A549 (cell line): ENCODE measurements at regions of chr17 and their contacts with region 1.

Region 1: DNA sequence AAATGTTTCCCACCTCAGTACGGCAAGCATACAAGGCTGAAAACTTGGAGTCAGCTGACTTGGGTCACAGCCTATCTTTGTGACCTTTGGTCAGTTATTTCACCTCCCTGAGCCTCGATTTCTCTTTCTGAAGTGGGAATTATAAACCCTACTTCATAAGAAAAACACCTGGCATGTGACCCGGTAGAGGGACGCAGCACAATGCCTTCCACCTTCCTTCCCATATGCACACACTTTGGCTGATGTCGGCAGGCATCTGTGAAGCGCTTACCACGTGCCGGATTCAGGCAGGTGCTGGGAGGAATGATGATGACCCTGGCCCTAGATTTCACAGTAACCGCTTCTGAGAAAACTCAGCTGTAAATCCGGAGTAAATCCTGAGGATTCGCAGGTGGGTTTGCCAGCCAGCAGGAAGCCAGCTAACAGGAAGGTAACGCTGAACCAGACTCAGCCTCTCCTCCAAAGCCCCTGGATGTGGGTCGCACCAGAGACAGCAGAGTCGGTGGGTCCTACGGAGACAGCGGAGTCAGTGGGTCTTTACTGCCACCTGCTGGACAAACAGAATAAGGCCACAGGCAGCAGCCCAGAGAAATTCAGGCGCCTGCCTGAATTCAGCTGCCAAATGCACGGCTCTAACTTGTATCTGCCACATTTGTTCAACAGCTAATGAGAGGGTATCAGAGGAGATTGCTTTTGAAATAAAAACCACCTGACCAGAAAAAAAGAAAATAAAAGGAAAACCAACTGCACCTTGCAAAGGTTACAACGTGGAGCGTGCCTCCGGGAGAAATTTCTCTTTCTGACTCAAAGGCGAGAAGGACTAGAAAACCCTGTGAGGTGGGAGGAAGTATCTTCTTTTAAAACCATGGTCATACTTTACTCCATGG is 16.6 kb downstream of the COPRS start:
- DNase-seq: peak; percentile 67 to 87
- ATAC-seq: peak; percentile 85 to 95
- H3K4me3 ChIP-seq: no peak overlapping the region; the same call in 2 of the 3 replicates
- H3K27ac ChIP-seq: peak overlapping the region in 1 of 2 experiments; percentile 68; a peak in 3 of 6 replicates
- H3K4me1 ChIP-seq: peaks cover 10% of the 10 kb centered on the region; the same call in 2 of the 3 replicates
- CTCF ChIP-seq: peak; percentile 99
- EP300 ChIP-seq: no peak
- POLR2A ChIP-seq: no peak
- RAD21 ChIP-seq: peak; percentile 98 to 99

Region 2: GRCh38 chr17:31433091-31433790 is 409.2 kb before region 1 on chr17:
- CTCF ChIA-PET with region 1: interaction called, 33 read pairs
- POLR2A ChIA-PET with region 1: no interaction called
- DNase-seq: no peak
- ATAC-seq: no peak
- H3K4me3 ChIP-seq: no peak overlapping the region
- H3K27ac ChIP-seq: no peak overlapping the region
- H3K4me1 ChIP-seq: no peaks in the 10 kb centered on the region
- CTCF ChIP-seq: no peak
- EP300 ChIP-seq: no peak
- POLR2A ChIP-seq: no peak
- RAD21 ChIP-seq: no peak

Region 3: DNA sequence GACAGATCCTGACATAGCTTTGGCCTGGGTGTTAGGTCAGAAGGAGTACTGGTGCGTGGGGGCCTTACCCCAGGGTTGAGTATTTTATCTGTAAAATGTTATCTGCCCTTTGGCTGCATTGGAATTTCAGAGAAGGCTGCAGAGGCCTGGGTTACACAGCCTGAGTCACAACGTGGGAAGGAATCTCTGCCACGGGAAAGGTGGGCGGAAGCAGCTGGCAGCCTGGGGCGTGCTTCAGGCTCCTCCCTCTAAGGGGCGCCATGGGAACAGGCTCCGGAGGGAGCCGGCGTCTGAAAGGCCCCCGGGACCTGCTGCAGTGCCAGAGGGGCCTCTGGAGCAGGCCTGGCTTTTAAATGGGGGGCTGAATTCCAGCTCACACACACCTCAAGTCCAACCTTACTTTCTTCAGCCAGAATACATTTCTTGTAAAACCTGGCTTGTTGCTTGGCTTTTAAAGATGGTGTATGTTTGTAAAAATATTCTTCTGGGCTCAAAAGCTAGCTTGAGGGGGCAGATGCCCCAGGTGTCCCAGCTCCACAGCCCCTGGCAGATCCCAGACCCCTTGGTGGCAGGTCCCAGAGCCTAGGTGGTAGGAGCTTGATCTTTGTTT is 308.8 kb before region 1 on chr17:
- CTCF ChIA-PET with region 1: interaction called, 36 read pairs
- POLR2A ChIA-PET with region 1: no interaction called
- DNase-seq: peak; percentile 45 to 79
- ATAC-seq: peak; percentile 58 to 83
- H3K4me3 ChIP-seq: no peak overlapping the region
- H3K27ac ChIP-seq: peak overlapping the region in 1 of 2 experiments; percentile 29; a peak in 3 of 6 replicates
- H3K4me1 ChIP-seq: peaks cover 7% of the 10 kb centered on the region
- CTCF ChIP-seq: peak; percentile 39
- EP300 ChIP-seq: no peak
- POLR2A ChIP-seq: no peak
- RAD21 ChIP-seq: peak; percentile 56 to 63

Region 4: GRCh38 chr17:31564883-31565301 is 277.5 kb before region 1 on chr17:
- CTCF ChIA-PET with region 1: interaction called, 377 read pairs
- POLR2A ChIA-PET with region 1: no interaction called
- DNase-seq: no peak
- ATAC-seq: no peak
- H3K4me3 ChIP-seq: no peak overlapping the region
- H3K27ac ChIP-seq: 0 out of 6 replicates have a peak overlapping the region, but pooled peaks of 1 of the 2 experiments have one; percentile 10
- H3K4me1 ChIP-seq: peaks cover 35% of the 10 kb centered on the region
- CTCF ChIP-seq: no peak
- EP300 ChIP-seq: no peak
- POLR2A ChIP-seq: no peak
- RAD21 ChIP-seq: no peak

Region 5: DNA sequence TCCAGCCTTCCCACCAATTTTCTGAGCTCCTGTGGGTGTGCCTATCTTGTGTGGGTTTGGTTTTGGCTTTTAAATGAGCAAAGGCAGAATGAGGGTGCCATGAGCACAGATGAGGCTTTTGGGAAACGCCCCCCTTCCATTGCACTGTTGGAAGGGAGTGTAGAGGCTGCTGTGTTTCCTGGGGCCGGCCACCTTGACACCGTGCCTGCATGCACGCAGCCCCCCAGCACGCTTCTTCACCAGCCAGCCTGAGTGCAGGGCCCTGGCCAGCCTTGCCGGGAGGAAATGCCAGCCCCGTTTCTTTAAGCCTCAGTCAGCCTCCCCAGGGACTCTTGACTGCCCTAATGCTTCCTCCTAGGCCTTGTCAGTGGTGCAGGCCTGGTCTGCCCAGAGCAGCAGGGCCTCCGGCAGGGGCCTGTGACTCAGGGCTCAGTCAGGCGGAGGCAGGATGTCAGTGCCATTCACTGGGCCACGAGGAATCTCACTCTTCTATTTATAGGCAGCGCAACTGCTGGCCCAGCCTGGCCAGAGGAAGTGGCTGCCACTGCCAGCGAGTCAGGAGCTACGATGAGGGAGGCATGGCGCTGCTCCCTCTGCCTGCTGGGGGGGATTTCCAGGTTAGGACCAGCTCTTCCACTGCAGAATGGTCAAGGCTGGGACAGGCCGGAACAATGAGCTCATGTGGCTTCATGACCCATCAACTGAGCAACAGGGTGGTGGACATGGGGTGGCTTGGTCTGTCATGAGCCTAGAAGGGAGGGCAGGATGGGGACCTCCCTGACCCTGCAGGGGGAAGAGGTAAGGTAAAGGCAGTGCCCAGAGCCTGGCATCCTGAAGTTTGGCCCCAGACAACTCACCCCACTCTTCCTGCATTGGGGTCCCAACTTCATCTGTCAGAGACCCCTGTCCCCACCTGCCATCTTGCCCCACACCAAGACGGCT is 245.8 kb before region 1 on chr17:
- CTCF ChIA-PET with region 1: interaction called, 13 read pairs
- POLR2A ChIA-PET with region 1: no interaction called
- DNase-seq: peak; percentile 86 to 87
- ATAC-seq: peak; percentile 92 to 95
- H3K4me3 ChIP-seq: no peak overlapping the region
- H3K27ac ChIP-seq: peak overlapping the region; percentile 49 to 83; a peak in 5 of 6 replicates
- H3K4me1 ChIP-seq: peaks cover 38% of the 10 kb centered on the region
- CTCF ChIP-seq: no peak
- EP300 ChIP-seq: no peak
- POLR2A ChIP-seq: 0 out of 2 replicates have a peak, but pooled peaks have one; percentile 11
- RAD21 ChIP-seq: peak in 1 of 2 experiments; percentile 12; a peak in 1 of 5 replicates

Region 6: DNA sequence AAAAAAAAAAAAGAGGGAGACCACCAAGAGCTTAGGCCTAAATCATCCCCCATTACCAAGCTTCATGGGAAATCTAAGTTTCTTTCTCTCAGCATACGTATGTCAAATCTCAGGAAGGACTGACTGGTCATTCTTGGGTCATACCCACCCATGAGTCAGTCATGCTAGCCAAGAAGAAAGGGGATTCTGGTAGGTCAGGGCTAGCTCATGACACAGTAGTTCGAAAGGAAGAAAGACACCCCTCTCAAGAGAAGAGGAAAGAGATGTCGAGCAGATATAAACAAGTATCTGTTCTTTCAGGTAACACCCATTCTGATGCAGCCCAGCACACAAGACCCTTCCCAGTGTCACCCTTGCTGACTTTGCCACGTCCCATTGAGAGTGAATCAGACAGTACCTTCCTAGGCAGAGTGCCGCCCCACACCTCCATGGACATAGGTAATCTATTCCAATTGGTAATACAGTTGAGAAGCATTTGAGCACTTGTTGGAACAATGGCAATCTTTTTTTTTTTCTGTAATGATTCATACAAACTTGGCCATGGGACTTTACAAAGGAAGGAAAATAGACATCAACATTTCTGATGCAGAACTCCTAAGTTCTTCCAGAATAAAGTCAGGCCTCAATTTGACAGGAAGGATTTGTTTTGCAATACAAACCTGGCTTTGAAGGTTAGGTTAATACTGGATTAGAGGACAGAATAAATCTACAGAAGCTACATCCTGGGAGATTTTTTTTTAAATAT is 21.6 kb before region 1 on chr17:
- CTCF ChIA-PET with region 1: interaction called, 19 read pairs
- POLR2A ChIA-PET with region 1: no interaction called
- DNase-seq: no peak
- ATAC-seq: no peak
- H3K4me3 ChIP-seq: no peak overlapping the region
- H3K27ac ChIP-seq: no peak overlapping the region
- H3K4me1 ChIP-seq: no peaks in the 10 kb centered on the region
- CTCF ChIP-seq: no peak
- EP300 ChIP-seq: no peak
- POLR2A ChIP-seq: no peak
- RAD21 ChIP-seq: no peak

Region 7: DNA sequence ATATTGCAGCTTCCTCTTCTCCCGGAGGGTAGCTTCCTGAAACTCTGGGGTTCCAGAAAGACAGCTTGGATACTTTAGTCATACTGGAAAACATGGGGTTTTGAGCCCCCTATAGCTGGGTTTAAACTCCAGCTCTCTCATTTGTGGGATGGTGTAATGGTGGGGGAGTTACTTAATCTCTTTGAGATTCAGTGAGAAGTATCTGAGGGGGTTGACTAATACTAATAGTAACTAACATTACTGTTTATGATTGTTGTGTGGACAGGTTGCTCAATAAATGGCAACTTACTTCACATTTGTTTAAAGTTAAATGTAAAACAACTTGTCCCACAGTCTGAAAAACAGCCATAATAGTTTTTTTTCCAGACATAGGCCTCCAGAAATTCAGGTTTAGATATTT is 89.3 kb after region 1 on chr17:
- CTCF ChIA-PET with region 1: no interaction called
- POLR2A ChIA-PET with region 1: no interaction called
- DNase-seq: no peak
- ATAC-seq: no peak
- H3K4me3 ChIP-seq: no peak overlapping the region
- H3K27ac ChIP-seq: no peak overlapping the region
- H3K4me1 ChIP-seq: no peaks in the 10 kb centered on the region
- CTCF ChIP-seq: no peak
- EP300 ChIP-seq: no peak; a peak in 1 of 5 replicates
- POLR2A ChIP-seq: no peak
- RAD21 ChIP-seq: no peak

Region 8: GRCh38 chr17:31997005-31997404 is 154.6 kb after region 1 on chr17:
- CTCF ChIA-PET with region 1: no interaction called
- POLR2A ChIA-PET with region 1: no interaction called
- DNase-seq: no peak
- ATAC-seq: no peak; a peak in 1 of 6 replicates
- H3K4me3 ChIP-seq: no peak overlapping the region
- H3K27ac ChIP-seq: no peak overlapping the region
- H3K4me1 ChIP-seq: no peaks in the 10 kb centered on the region
- CTCF ChIP-seq: no peak
- EP300 ChIP-seq: no peak
- POLR2A ChIP-seq: no peak
- RAD21 ChIP-seq: no peak

Region 9: DNA sequence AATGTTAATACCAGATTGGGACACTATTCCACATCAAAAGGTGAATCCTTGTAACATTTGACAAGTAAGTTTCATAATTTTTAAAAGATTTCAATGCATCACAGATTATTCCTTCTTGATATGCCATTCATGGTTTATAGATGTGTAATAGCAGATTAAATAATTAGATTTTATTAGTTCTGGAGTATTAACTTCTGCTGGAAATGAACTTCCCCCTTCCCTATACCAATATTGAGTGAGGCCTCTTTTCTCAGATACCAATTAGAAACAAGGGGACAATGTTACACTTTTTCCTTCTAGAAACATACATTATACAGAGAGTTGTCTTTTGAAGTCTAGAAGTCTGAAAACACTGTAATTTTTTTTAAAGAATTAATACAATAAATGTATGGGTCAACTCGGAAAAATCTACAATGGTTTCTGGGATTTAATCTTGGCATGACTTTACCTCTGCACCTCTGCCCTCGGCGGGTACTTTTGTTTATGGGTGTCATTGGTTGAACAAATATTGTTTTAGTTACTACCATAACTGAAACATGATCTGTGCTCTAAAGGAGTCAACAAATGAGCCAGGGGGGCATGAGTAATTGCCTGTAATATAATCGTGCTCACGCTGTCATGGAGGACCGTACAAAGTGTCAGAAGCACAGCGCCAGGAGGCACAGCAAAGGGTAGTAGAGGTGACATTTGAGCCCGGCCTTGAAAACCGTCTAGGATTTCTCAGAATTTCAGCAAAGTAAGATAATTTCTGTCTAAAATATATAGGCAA is 173.0 kb after region 1 on chr17:
- CTCF ChIA-PET with region 1: no interaction called
- POLR2A ChIA-PET with region 1: no interaction called
- DNase-seq: peak in 1 of 2 experiments; percentile 26
- ATAC-seq: no peak
- H3K4me3 ChIP-seq: no peak overlapping the region
- H3K27ac ChIP-seq: no peak overlapping the region
- H3K4me1 ChIP-seq: peaks cover 9% of the 10 kb centered on the region; the same call in 2 of the 3 replicates
- CTCF ChIP-seq: no peak
- EP300 ChIP-seq: no peak
- POLR2A ChIP-seq: no peak
- RAD21 ChIP-seq: no peak